ENCODE measurements at regions of chr15 and their contacts with region 1.

Region 1: GRCh38 chr15:35115155-35115725 is 30.1 kb upstream of the NANOGP8 start:
- DNase-seq: no peak
- H3K4me3 ChIP-seq: no peak overlapping the region
- H3K27ac ChIP-seq: no peak overlapping the region
- H3K4me1 ChIP-seq: no peaks in the 10 kb centered on the region
- H3K27me3 ChIP-seq: no peaks in the 10 kb centered on the region
- CTCF ChIP-seq: no peak

Region 2: DNA sequence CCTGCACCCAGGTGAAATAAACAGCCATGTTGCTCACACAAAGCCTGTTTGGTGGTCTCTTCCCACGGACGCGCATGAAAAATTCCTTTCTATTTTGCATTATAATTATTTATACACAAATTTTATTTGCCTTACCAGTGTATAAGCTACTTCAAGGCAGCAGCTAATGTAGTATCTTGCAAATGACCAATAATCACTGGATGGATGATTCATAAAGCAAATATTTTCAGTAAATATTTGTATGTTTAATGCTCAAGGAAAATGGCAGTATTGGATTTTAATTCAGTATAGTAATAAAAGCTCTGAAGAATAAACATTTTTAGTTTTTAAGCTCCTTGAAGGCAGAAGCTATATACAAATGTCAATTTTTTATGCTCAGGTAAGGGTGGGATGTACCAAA is 128.5 kb after region 1 on chr15:
- CTCF ChIA-PET with region 1: no interaction called
- POLR2A ChIA-PET with region 1: no interaction called
- intact Hi-C with region 1: loop called (anchors 10 kb)
- DNase-seq: no peak
- H3K4me3 ChIP-seq: no peak overlapping the region
- H3K27ac ChIP-seq: no peak overlapping the region
- H3K4me1 ChIP-seq: no peaks in the 10 kb centered on the region
- H3K27me3 ChIP-seq: no peaks in the 10 kb centered on the region
- CTCF ChIP-seq: no peak

Region 3: DNA sequence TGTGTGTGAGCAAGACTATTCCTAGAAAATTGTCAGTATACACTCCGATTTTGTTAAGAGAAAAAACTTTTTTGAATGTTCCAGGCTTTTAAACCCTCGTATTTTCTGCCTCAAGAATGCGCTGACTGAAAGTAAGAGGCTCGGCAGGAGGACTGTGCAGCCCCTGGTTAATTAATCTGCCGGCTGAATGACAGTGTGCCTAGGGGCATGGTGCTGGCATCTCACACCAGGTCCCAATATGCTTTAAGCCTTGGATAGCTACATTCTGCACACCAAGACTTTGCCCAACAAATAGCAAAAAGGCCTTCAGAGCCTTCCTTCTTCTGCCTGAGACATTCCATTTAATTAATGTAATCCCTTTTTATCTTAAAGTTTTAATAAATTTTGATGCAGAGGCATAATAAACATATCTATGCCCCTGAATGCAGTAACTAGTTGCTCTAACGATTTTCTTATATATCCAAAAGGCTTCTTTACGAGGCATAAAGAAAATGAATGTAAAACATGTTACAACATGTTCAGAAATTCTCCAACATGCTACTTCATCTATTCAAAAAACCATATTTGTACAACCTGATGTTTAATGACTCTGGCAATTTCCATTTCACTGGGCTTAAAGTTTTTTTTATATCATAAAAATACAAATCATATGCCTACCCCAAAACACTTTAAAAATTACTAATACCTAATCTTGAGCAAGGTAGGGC is 392.8 kb after region 1 on chr15:
- CTCF ChIA-PET with region 1: no interaction called
- POLR2A ChIA-PET with region 1: no interaction called
- intact Hi-C with region 1: no loop called
- DNase-seq: peak; percentile 52
- H3K4me3 ChIP-seq: peak overlapping the region; percentile 22
- H3K27ac ChIP-seq: peak overlapping the region; percentile 12
- H3K4me1 ChIP-seq: peaks cover 45% of the 10 kb centered on the region
- H3K27me3 ChIP-seq: no peaks in the 10 kb centered on the region
- CTCF ChIP-seq: no peak